Heart right ventricle (tissue), 16 donors: ENCODE measurements at regions of chrX and their contacts with region 1.

Region 1: DNA sequence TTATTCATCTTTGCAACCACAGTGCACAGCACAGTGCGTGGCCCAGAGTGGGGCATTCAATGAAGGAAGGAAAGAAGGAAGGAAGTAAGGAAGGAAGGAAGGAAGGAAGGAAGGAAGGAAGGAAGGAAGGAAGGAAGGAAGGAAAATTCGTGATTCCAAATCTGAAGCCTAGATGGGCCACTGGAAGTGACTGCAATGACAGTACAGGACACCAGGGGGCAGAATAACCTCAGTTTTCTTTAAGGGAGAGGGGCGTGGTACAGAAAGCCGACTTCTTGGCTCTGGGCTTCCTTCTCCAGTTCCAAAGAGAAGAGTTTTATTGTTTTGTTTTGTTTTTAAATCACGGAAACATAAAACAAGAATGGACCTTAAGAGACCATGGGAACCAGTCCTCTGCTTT is 47.8 kb downstream of the APLN start:
- DNase-seq: peak in 1 of 2 donors; percentile 57
- ATAC-seq: peak in 7 of 8 donors; percentile 27 to 76 (median 56)
- H3K4me3 ChIP-seq: no peak overlapping the region
- H3K27ac ChIP-seq: no peak overlapping the region
- H3K4me1 ChIP-seq: peaks cover 0 to 18% (median 7%) of the 10 kb centered on the region in 9 donors
- H3K27me3 ChIP-seq: peaks cover 0 to 9% (median 0%) of the 10 kb centered on the region in 7 donors
- CTCF ChIP-seq: peak; percentile 41 to 75 (median 71)

Region 2: GRCh38 chrX:129433461-129433860 is 173.5 kb before region 1 on chrX:
- intact Hi-C with region 1: no loop called
- DNase-seq: no peak
- ATAC-seq: no peak
- H3K4me3 ChIP-seq: no peak overlapping the region
- H3K27ac ChIP-seq: no peak overlapping the region
- H3K4me1 ChIP-seq: no peaks in the 10 kb centered on the region
- H3K27me3 ChIP-seq: no peaks in the 10 kb centered on the region
- CTCF ChIP-seq: no peak

Region 3: GRCh38 chrX:129472116-129472515 is 134.8 kb before region 1 on chrX:
- intact Hi-C with region 1: no loop called
- DNase-seq: no peak
- ATAC-seq: no peak
- H3K4me3 ChIP-seq: no peak overlapping the region
- H3K27ac ChIP-seq: no peak overlapping the region
- H3K4me1 ChIP-seq: no peaks in the 10 kb centered on the region
- H3K27me3 ChIP-seq: peaks cover 0 to 12% (median 0%) of the 10 kb centered on the region in 7 donors
- CTCF ChIP-seq: no peak

Region 4: GRCh38 chrX:129726307-129727111 is 119.6 kb after region 1 on chrX:
- intact Hi-C with region 1: loop called in 6 of 10 experiments (anchors 1 to 5 kb)
- DNase-seq: peak; percentile 59 to 64
- ATAC-seq: peak in 7 of 8 donors; percentile 77 to 93 (median 88)
- H3K4me3 ChIP-seq: no peak overlapping the region
- H3K27ac ChIP-seq: no peak overlapping the region
- H3K4me1 ChIP-seq: no peaks in the 10 kb centered on the region
- H3K27me3 ChIP-seq: peaks cover 0 to 12% (median 0%) of the 10 kb centered on the region in 7 donors
- CTCF ChIP-seq: peak; percentile 44 to 78 (median 71)

Region 5: DNA sequence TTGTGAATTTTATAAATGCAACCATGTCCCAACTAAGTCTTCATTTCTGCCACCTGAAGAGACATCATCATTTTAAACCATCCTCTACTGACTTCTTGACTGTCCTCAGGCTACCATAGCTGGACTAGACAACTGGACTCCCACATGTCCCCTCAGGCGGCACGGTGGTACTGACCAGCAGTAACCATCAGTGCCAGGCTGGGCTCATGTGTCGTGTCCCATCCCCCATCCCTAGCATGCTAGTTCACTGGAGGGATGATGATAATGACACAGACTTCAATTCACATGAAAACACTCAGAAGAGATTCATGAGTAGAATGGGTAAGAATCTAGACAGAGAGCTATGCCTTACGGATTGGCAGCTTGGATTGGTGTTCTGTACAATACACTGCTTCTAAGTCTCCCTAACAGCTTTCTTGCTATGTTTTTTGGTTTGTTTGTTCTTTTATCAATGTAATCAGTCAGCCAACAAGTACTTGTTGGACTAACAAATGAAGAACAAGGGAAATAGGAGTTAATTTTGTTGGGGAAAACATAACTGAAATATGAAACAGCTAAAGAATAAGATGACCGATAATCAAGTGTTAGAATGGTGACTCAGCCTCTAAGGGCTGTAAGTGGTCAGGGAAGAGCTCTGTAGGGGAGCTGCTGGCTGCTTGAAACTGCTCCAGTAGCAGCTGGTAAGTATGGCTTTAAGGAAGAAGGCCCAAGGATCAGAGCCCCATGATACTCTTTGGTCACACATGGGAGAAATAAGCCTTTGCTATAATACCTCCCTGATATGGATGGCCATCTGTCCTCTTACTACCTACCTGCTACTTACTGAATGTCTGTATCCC is 226.5 kb after region 1 on chrX:
- intact Hi-C with region 1: loop called in 5 of 10 experiments (anchors 5 to 10 kb)
- DNase-seq: no peak
- ATAC-seq: peak in 1 of 8 donors; percentile 65
- H3K4me3 ChIP-seq: no peak overlapping the region
- H3K27ac ChIP-seq: no peak overlapping the region
- H3K4me1 ChIP-seq: peaks cover 0 to 4% (median 0%) of the 10 kb centered on the region in 9 donors
- H3K27me3 ChIP-seq: no peaks in the 10 kb centered on the region
- CTCF ChIP-seq: no peak

Region 6: GRCh38 chrX:129905787-129906580 is 299.1 kb after region 1 on chrX and contains the start of gene UTP14A:
- intact Hi-C with region 1: loop called in 4 of 10 experiments (anchors 10 kb)
- DNase-seq: peak; percentile 79 to 88
- ATAC-seq: peak; percentile 96 to 99 (median 99)
- H3K4me3 ChIP-seq: peak within 1 kb of the TSS; percentile 50 to 80 (median 70)
- H3K27ac ChIP-seq: peak within 1 kb of the TSS; percentile 35 to 87 (median 81)
- H3K4me1 ChIP-seq: peaks cover 0 to 12% (median 6%) of the 10 kb centered on the region in 9 donors
- H3K27me3 ChIP-seq: no peaks in the 10 kb centered on the region
- CTCF ChIP-seq: no peak
- total RNA-seq, gene UTP14A: 7.4 to 12.6 (median 9.6) TPM

Region 7: GRCh38 chrX:130024127-130024526 is 417.2 kb after region 1 on chrX:
- intact Hi-C with region 1: loop called in 3 of 10 experiments (anchors 10 kb)
- DNase-seq: peak; percentile 75 to 79
- ATAC-seq: peak; percentile 86 to 98 (median 95)
- H3K4me3 ChIP-seq: no peak overlapping the region
- H3K27ac ChIP-seq: peak overlapping the region in 2 of 10 donors; percentile 46 to 54
- H3K4me1 ChIP-seq: peaks cover 0 to 28% (median 7%) of the 10 kb centered on the region in 9 donors
- H3K27me3 ChIP-seq: no peaks in the 10 kb centered on the region
- CTCF ChIP-seq: no peak

Region 8: DNA sequence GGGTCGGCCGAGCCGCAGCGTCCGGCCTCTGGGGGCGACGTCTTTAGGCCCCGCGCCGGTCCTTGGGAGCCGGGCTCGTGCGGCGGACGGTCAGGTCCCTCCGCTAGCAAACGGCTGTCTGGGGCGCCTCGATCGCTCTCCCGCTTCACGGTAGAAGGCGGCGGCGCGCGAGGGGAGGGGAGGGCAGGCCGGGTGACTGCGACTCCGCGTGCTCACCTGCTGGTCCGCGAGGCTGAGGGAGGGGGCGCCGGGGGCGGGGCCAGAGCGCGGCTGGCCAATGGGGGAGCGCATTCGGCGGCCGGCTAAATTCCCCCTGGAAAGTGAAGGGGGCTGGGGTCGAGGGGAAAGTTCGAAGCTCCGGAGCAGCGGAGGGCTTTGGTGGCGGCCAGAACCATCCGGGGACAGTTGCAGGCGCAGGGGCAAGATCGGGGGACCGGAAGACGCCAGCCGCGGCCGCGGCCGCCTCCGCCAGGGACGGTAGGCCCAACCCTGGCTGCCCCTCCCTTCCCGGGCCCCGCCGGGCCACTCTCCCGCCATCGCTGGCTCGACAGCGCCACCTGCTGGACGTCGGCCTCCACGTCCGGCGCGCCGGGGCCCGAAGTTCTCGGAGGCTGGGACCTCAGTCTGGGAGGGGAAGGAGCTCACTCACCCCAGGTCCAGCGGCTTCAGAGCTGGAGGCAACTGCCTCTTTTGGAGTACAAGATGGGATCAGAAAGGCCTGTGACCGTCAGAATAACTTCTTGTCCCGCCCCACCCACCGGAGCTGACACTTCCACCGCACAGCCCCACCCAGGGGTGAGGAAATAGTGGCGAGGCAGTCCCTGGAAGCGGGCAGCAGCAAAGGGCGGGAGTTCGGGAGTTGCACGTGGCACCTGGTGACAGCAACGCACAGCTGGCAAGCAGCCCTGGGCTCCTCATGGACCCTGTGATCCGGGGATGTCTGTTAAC is 453.5 kb after region 1 on chrX:
- intact Hi-C with region 1: loop called in 6 of 10 experiments (anchors 2 to 10 kb)
- DNase-seq: peak; percentile 69 to 86
- ATAC-seq: peak; percentile 91 to 97 (median 94)
- H3K4me3 ChIP-seq: peak overlapping the region; percentile 28 to 64 (median 57)
- H3K27ac ChIP-seq: peak overlapping the region in 8 of 10 donors; percentile 25 to 69 (median 58)
- H3K4me1 ChIP-seq: peaks cover 0 to 12% (median 3%) of the 10 kb centered on the region in 9 donors
- H3K27me3 ChIP-seq: no peaks in the 10 kb centered on the region
- CTCF ChIP-seq: peak; percentile 67 to 90 (median 85)

Region 9: GRCh38 chrX:130916636-130917422 is 1309.9 kb after region 1 on chrX:
- intact Hi-C with region 1: loop called in 1 of 10 experiments (anchors 10 kb)
- DNase-seq: peak in 1 of 2 donors; percentile 9
- ATAC-seq: peak in 4 of 8 donors; percentile 28 to 62 (median 45)
- H3K4me3 ChIP-seq: no peak overlapping the region
- H3K27ac ChIP-seq: no peak overlapping the region
- H3K4me1 ChIP-seq: no peaks in the 10 kb centered on the region
- H3K27me3 ChIP-seq: peaks cover 0 to 30% (median 0%) of the 10 kb centered on the region in 7 donors
- CTCF ChIP-seq: peak; percentile 49 to 90 (median 73)